Head of caudate nucleus (tissue), 42 donors: ENCODE measurements at regions of chr2 and their contacts with region 1.

Region 1: GRCh38 chr2:27211829-27212627 is at the starts of genes ATRAID and SLC5A6:
- DNase-seq: peak; percentile 65 to 95 (median 91)

Region 2: DNA sequence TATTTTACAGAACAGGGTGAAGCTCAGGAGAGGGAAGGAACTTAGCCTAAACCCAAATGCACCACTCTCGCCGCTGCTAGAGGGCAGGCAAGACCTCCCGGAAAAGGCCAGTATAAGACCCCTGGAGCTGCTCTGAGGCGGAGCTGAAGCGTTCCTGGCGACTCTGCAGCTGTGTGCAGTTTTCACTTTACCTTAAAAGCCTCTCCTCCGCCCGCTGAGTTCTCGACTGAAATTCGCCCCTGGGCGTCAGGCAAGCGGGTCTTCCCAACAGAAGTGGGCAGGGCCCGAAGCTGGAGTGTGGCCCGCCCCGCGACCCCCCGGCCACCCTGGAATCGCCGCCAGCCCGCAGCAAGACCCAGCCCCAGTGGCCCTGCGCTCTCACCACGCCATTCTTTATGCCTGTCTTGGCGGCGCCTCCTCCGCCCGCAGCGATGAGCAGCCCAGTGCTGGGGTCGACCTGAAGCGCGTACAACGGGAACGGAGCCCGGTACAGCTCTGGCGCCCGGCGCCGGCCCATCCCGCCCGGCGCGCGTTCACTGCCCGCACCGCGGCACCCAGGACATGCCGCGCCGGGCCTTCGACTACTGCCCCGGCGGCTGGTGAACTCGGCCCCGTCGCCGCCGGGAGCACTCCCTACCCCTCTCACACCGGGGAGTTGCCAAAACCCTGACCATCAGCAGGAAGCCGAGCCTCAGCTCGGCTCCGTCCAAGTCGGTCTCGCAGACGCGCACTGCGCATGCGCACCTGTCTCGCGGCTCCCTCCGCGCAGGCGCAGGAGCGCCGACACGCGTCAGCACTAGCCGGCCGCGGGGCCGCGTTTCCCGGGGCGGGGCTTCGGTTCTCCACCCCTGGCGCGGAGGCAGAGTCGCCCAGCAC is 77.9 kb before region 1 on chr2 and contains the start of gene PREB:
- intact Hi-C with region 1: loop called (anchors 5 kb)
- DNase-seq: peak; percentile 90 to 99 (median 97)